ENCODE measurements at regions of chr5 and their contacts with region 1.

Region 1: GRCh38 chr5:147188200-147189108 is 46.4 kb upstream of the STK32A start:
- DNase-seq: peak; percentile 46
- H3K4me3 ChIP-seq: peak overlapping the region in 1 of 2 experiments; percentile 44; a peak in 2 of 4 replicates
- H3K27ac ChIP-seq: no peak overlapping the region
- H3K4me1 ChIP-seq: peaks cover 4 to 7% of the 10 kb centered on the region in 2 experiments; a peak in 2 of 4 replicates
- H3K27me3 ChIP-seq: no peaks in the 10 kb centered on the region
- CTCF ChIP-seq: peak; percentile 90
- EP300 ChIP-seq: 0 out of 4 replicates have a peak, but pooled peaks of 1 of the 2 experiments have one; percentile 7
- RAD21 ChIP-seq: peak; percentile 93

Region 2: DNA sequence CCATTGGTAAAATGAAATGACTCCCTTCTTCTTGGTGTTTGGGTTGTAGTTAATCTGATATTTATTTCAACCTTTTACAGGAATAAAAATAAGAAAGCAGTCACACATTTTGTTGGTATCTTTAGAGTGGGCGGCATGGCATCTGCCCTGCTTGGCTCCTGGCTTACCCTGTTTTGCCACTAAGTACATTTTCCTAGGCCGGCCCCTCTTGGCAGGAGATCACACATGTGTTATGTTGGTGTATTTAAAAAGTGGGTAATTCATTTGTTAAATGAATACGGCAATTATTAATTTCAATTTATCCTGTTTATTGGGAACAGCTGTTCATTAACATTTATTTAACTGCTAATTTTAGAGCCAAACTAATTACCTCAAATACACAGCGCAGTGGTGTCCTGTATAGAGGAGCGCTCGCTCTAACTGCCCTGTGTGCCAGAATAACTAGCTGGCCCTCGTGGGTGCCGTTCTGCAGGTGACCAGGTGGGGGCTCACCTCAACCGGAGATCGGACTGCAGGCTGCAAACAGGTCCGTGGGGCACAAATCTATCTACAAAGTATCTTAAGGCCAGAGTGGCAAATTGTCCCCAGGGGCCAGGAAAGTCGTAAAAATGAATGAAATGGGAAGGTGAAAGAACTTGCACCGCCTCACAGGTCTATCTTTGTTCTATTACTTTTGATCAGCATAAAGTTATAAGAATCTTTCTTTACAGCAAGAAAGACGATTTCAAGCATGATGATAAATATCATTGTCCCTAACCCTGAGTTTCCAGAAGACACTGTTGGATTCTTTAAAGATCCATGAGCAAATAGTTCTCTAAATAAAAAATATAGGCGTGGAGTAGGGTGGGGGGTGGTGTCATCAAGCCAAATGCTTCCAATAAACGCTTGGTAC is 646.2 kb before region 1 on chr5:
- CTCF ChIA-PET with region 1: interaction called, 127 read pairs
- POLR2A ChIA-PET with region 1: no interaction called
- DNase-seq: peak; percentile 74
- H3K4me3 ChIP-seq: peak overlapping the region in 1 of 2 experiments; percentile 20; a peak in 1 of 4 replicates
- H3K27ac ChIP-seq: no peak overlapping the region
- H3K4me1 ChIP-seq: no peaks in the 10 kb centered on the region; a peak in 1 of 4 replicates
- H3K27me3 ChIP-seq: no peaks in the 10 kb centered on the region
- CTCF ChIP-seq: peak; percentile 94
- EP300 ChIP-seq: no peak
- RAD21 ChIP-seq: peak; percentile 96

Region 3: GRCh38 chr5:146947181-146947941 is 241.1 kb before region 1 on chr5:
- CTCF ChIA-PET with region 1: interaction called, 15 read pairs
- POLR2A ChIA-PET with region 1: no interaction called
- DNase-seq: peak; percentile 21
- H3K4me3 ChIP-seq: no peak overlapping the region; a peak in 1 of 4 replicates
- H3K27ac ChIP-seq: no peak overlapping the region
- H3K4me1 ChIP-seq: peaks cover 0 to 6% of the 10 kb centered on the region in 2 experiments; a peak in 2 of 4 replicates
- H3K27me3 ChIP-seq: no peaks in the 10 kb centered on the region
- CTCF ChIP-seq: peak; percentile 65
- EP300 ChIP-seq: no peak
- RAD21 ChIP-seq: peak; percentile 72

Region 4: GRCh38 chr5:147148715-147149114 is 39.7 kb before region 1 on chr5:
- CTCF ChIA-PET with region 1: interaction called, 10 read pairs
- POLR2A ChIA-PET with region 1: no interaction called
- DNase-seq: peak; percentile 34
- H3K4me3 ChIP-seq: no peak overlapping the region
- H3K27ac ChIP-seq: peak overlapping the region in 1 of 2 experiments; percentile 85; a peak in 2 of 4 replicates
- H3K4me1 ChIP-seq: peaks cover 0 to 12% of the 10 kb centered on the region in 2 experiments; a peak in 2 of 4 replicates
- H3K27me3 ChIP-seq: no peaks in the 10 kb centered on the region
- CTCF ChIP-seq: no peak
- EP300 ChIP-seq: peak in 1 of 2 experiments; percentile 88; a peak in 2 of 4 replicates
- RAD21 ChIP-seq: peak; percentile 18

Region 5: GRCh38 chr5:147208134-147208533 is 19.7 kb after region 1 on chr5:
- CTCF ChIA-PET with region 1: interaction called, 11 read pairs
- POLR2A ChIA-PET with region 1: no interaction called
- DNase-seq: no peak
- H3K4me3 ChIP-seq: no peak overlapping the region
- H3K27ac ChIP-seq: peak overlapping the region in 1 of 2 experiments; percentile 30; a peak in 1 of 4 replicates
- H3K4me1 ChIP-seq: no peaks in the 10 kb centered on the region; a peak in 2 of 4 replicates
- H3K27me3 ChIP-seq: no peaks in the 10 kb centered on the region
- CTCF ChIP-seq: no peak
- EP300 ChIP-seq: no peak
- RAD21 ChIP-seq: no peak

Measured in SK-N-SH (cell line).